ENCODE measurements at regions of chr19 and their contacts with region 1.

Region 1: DNA sequence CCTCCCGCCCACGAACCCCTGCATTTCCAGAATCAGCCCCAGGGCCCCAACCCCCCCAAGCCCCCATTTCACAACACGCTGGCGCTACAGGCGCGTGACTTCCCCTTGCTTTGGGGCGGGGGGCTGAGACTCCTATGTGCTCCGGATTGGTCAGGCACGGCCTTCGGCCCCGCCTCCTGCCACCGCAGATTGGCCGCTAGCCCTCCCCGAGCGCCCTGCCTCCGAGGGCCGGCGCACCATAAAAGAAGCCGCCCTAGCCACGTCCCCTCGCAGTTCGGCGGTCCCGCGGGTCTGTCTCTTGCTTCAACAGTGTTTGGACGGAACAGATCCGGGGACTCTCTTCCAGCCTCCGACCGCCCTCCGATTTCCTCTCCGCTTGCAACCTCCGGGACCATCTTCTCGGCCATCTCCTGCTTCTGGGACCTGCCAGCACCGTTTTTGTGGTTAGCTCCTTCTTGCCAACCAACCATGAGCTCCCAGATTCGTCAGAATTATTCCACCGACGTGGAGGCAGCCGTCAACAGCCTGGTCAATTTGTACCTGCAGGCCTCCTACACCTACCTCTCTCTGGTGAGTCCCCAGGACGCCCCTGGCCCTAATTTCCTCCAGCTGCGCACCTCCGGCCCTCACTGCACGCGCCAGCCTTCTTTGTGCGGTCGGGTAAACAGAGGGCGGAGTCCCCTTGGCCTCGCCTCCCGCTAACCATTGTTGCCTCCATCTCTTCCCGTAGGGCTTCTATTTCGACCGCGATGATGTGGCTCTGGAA is at the start of gene FTL:
- DNase-seq: peak; percentile 93
- ATAC-seq: peak; percentile 71
- H3K4me3 Mint-ChIP-seq: peak within 1 kb of the TSS; percentile 87
- H3K27ac Mint-ChIP-seq: peak within 1 kb of the TSS; percentile 92
- H3K4me1 Mint-ChIP-seq: peaks cover 49% of the 10 kb centered on the region
- H3K27me3 Mint-ChIP-seq: no peaks in the 10 kb centered on the region
- total RNA-seq, gene FTL: 1,232 to 1,343 TPM

Region 2: DNA sequence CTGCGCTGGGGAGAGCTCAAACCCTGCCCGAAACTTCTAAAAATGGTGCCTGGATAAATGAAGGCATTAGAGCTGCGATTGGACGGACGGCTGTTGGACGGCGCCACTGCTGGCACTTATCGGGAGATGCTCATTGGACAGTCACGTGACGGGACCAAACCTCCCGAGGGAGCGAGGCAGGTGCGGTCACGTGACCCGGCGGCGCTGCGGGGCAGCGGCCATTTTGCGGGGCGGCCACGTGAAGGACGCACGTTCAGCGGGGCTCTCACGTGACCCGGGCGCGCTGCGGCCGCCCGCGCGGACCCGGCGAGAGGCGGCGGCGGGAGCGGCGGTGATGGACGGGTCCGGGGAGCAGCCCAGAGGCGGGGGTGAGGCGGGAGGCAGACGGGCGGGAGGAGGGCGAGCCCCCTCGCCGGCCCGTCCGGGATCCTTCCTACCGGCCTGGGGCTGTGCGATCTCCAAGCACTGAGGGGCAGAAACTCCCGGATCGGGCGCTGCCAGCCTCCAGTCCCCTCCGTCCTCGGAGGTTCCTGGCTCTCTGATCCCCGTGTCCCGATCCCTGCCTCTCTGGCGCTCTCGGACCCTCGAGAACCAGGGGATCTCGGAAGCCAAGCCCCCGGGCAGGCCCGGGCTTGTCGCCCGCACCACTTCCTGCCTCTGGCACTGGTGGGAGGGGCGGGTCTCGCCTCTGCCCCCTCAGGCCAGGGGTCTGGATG is 10.5 kb before region 1 on chr19 and contains the start of gene BAX:
- POLR2A ChIA-PET with region 1: interaction called, 10 read pairs
- DNase-seq: peak; percentile 94
- ATAC-seq: peak; percentile 85
- H3K4me3 Mint-ChIP-seq: peak within 1 kb of the TSS; percentile 96
- H3K27ac Mint-ChIP-seq: peak within 1 kb of the TSS; percentile 94
- H3K4me1 Mint-ChIP-seq: peaks cover 28% of the 10 kb centered on the region
- H3K27me3 Mint-ChIP-seq: peaks cover 1% of the 10 kb centered on the region
- total RNA-seq, gene BAX: 285 to 296 TPM

Region 3: GRCh38 chr19:49127674-49128544 is 162.7 kb after region 1 on chr19:
- POLR2A ChIA-PET with region 1: no interaction called
- DNase-seq: peak; percentile 96
- ATAC-seq: peak; percentile 98
- H3K4me3 Mint-ChIP-seq: peak overlapping the region; percentile 90
- H3K27ac Mint-ChIP-seq: peak overlapping the region; percentile 81
- H3K4me1 Mint-ChIP-seq: peaks cover 8% of the 10 kb centered on the region
- H3K27me3 Mint-ChIP-seq: peaks cover 8% of the 10 kb centered on the region

Measured in activated naive CD8-positive, alpha-beta T cell treated with anti-CD3 and anti-CD28 coated beads, Interleukin-2, amount 10 ng/mL, durations not matched to agents 7 days and 5 days (primary cell).